Naive thymus-derived CD4-positive, alpha-beta T cell (primary cell): ENCODE measurements at regions of chr2 and their contacts with region 1.

Region 1: GRCh38 chr2:48343571-48344440 is 186.1 kb upstream of the STON1 start:
- DNase-seq: peak in 7 of 9 donors; percentile 36 to 74 (median 64)
- ATAC-seq: peak; percentile 86
- H3K4me3 ChIP-seq: peak overlapping the region; percentile 47
- H3K4me3 Mint-ChIP-seq: peak overlapping the region; percentile 31 to 85 (median 69)
- H3K27ac ChIP-seq: peak overlapping the region; percentile 36
- H3K27ac Mint-ChIP-seq: peak overlapping the region; percentile 57 to 89 (median 79)
- H3K4me1 ChIP-seq: peaks cover 13 to 23% of the 10 kb centered on the region in 2 donors
- H3K4me1 Mint-ChIP-seq: peaks cover 20 to 80% (median 57%) of the 10 kb centered on the region in 7 donors
- H3K27me3 ChIP-seq: no peaks in the 10 kb centered on the region
- H3K27me3 Mint-ChIP-seq: no peaks in the 10 kb centered on the region

Region 2: GRCh38 chr2:47751875-47752357 is 591.9 kb before region 1 on chr2:
- CTCF ChIA-PET with region 1: no interaction called
- POLR2A ChIA-PET with region 1: no interaction called
- intact Hi-C with region 1: no loop called
- DNase-seq: no peak
- ATAC-seq: peak; percentile 29
- H3K4me3 ChIP-seq: no peak overlapping the region
- H3K4me3 Mint-ChIP-seq: no peak overlapping the region
- H3K27ac ChIP-seq: no peak overlapping the region
- H3K27ac Mint-ChIP-seq: no peak overlapping the region
- H3K4me1 ChIP-seq: no peaks in the 10 kb centered on the region
- H3K4me1 Mint-ChIP-seq: no peaks in the 10 kb centered on the region
- H3K27me3 ChIP-seq: no peaks in the 10 kb centered on the region
- H3K27me3 Mint-ChIP-seq: no peaks in the 10 kb centered on the region

Region 3: GRCh38 chr2:47867205-47867604 is 476.6 kb before region 1 on chr2:
- CTCF ChIA-PET with region 1: no interaction called
- POLR2A ChIA-PET with region 1: no interaction called
- intact Hi-C with region 1: no loop called
- DNase-seq: no peak
- ATAC-seq: peak; percentile 42
- H3K4me3 ChIP-seq: no peak overlapping the region
- H3K4me3 Mint-ChIP-seq: peak overlapping the region in 3 of 10 donors; percentile 21 to 53 (median 40)
- H3K27ac ChIP-seq: no peak overlapping the region
- H3K27ac Mint-ChIP-seq: peak overlapping the region in 8 of 9 donors; percentile 4 to 83 (median 64)
- H3K4me1 ChIP-seq: peaks cover 7 to 42% of the 10 kb centered on the region in 2 donors
- H3K4me1 Mint-ChIP-seq: peaks cover 48 to 100% (median 91%) of the 10 kb centered on the region in 7 donors
- H3K27me3 ChIP-seq: no peaks in the 10 kb centered on the region
- H3K27me3 Mint-ChIP-seq: no peaks in the 10 kb centered on the region

Region 4: DNA sequence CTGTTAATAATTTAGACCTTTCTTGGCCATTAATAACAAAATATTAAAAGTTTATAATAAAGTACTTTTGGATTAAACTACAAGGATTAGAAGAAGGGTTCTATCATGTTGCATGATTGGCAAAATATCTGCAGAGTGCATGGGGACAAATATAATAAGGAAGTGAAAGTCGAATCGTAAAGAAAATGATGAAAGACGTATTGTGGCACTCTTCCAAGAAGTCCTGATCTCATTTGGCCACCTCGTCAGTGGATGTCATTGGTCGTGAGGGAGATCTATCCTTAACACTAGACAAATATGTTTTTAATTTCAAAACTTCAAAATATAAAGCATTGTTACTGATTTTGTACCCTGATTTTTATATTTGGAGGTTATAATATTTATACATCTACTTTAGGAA is 11.5 kb before region 1 on chr2:
- CTCF ChIA-PET with region 1: no interaction called
- POLR2A ChIA-PET with region 1: interaction called, 8 read pairs
- intact Hi-C with region 1: loop called in 1 of 2 experiments (anchors 1 kb)
- DNase-seq: no peak
- ATAC-seq: peak; percentile 66
- H3K4me3 ChIP-seq: no peak overlapping the region
- H3K4me3 Mint-ChIP-seq: peak overlapping the region in 9 of 10 donors; percentile 14 to 69 (median 51)
- H3K27ac ChIP-seq: no peak overlapping the region
- H3K27ac Mint-ChIP-seq: peak overlapping the region in 6 of 9 donors; percentile 26 to 85 (median 41)
- H3K4me1 ChIP-seq: peaks cover 14 to 17% of the 10 kb centered on the region in 2 donors
- H3K4me1 Mint-ChIP-seq: peaks cover 38 to 84% (median 73%) of the 10 kb centered on the region in 7 donors
- H3K27me3 ChIP-seq: no peaks in the 10 kb centered on the region
- H3K27me3 Mint-ChIP-seq: no peaks in the 10 kb centered on the region

Region 5: GRCh38 chr2:48356701-48357325 is 13.0 kb after region 1 on chr2:
- CTCF ChIA-PET with region 1: no interaction called
- POLR2A ChIA-PET with region 1: interaction called, 6 read pairs
- intact Hi-C with region 1: loop called (anchors 1 kb)
- DNase-seq: peak in 7 of 9 donors; percentile 53 to 77 (median 72)
- ATAC-seq: peak; percentile 88
- H3K4me3 ChIP-seq: peak overlapping the region; percentile 0
- H3K4me3 Mint-ChIP-seq: peak overlapping the region; percentile 5 to 84 (median 72)
- H3K27ac ChIP-seq: peak overlapping the region; percentile 72
- H3K27ac Mint-ChIP-seq: peak overlapping the region; percentile 84 to 97 (median 95)
- H3K4me1 ChIP-seq: peaks cover 15 to 50% of the 10 kb centered on the region in 2 donors
- H3K4me1 Mint-ChIP-seq: peaks cover 46 to 77% (median 67%) of the 10 kb centered on the region in 7 donors
- H3K27me3 ChIP-seq: no peaks in the 10 kb centered on the region
- H3K27me3 Mint-ChIP-seq: no peaks in the 10 kb centered on the region

Region 6: GRCh38 chr2:48414980-48415835 is 71.4 kb after region 1 on chr2:
- CTCF ChIA-PET with region 1: no interaction called
- POLR2A ChIA-PET with region 1: no interaction called
- intact Hi-C with region 1: loop called in 1 of 2 experiments (anchors 1 kb)
- DNase-seq: peak in 3 of 9 donors; percentile 23 to 39 (median 34)
- ATAC-seq: peak; percentile 66
- H3K4me3 ChIP-seq: no peak overlapping the region
- H3K4me3 Mint-ChIP-seq: peak overlapping the region; percentile 18 to 69 (median 56)
- H3K27ac ChIP-seq: no peak overlapping the region
- H3K27ac Mint-ChIP-seq: peak overlapping the region; percentile 23 to 90 (median 63)
- H3K4me1 ChIP-seq: peaks cover 0 to 17% of the 10 kb centered on the region in 2 donors
- H3K4me1 Mint-ChIP-seq: peaks cover 23 to 43% (median 37%) of the 10 kb centered on the region in 7 donors
- H3K27me3 ChIP-seq: no peaks in the 10 kb centered on the region
- H3K27me3 Mint-ChIP-seq: no peaks in the 10 kb centered on the region